Activated CD4-positive, alpha-beta T cell treated with anti-CD3 and anti-CD28 coated beads, Interleukin-2, amount 10 ng/mL, durations not matched to agents 24 days and 14 days (primary cell): ENCODE measurements at regions of chr11 and their contacts with region 1.

Region 1: GRCh38 chr11:36564376-36565030 is 3.3 kb upstream of the RAG1 start:
- DNase-seq: peak; percentile 85
- H3K4me3 Mint-ChIP-seq: peak overlapping the region; percentile 73
- H3K27ac Mint-ChIP-seq: no peak overlapping the region
- H3K4me1 Mint-ChIP-seq: peaks cover 12% of the 10 kb centered on the region
- H3K27me3 Mint-ChIP-seq: peaks cover 56% of the 10 kb centered on the region

Region 2: GRCh38 chr11:36622431-36623136 is 58.1 kb after region 1 on chr11:
- intact Hi-C with region 1: loop called (anchors 5 kb)
- DNase-seq: peak; percentile 60
- H3K4me3 Mint-ChIP-seq: no peak overlapping the region
- H3K27ac Mint-ChIP-seq: no peak overlapping the region
- H3K4me1 Mint-ChIP-seq: no peaks in the 10 kb centered on the region
- H3K27me3 Mint-ChIP-seq: peaks cover 13% of the 10 kb centered on the region

Region 3: DNA sequence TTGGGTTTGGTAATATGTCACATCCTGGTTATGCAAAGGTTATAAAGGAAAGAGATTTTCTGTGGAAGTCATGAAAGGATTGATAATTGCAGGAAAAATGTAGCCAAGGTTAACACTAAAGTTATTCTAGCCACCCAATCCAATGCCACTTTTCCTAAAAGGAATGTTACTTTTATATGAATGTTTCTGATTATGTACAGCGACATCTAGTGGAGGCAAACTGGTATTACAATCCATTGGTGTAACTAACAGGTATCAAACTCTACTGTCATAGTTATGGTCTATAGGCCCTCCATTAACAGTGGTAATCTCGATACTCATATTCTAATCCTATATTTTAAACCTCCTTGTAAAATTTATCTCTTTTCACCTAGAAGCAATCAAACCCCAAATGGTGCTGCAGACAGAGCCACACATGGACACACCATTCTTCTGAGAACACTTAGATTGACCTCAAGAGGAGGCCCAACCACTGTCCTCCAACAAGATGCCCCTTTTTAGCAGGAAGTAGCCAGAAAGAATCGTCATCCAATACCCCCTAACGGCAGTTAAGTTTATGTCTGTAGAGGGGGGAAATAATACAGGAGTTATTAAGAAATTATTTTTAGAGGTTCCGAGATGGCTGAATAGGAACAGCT is 108.4 kb after region 1 on chr11:
- intact Hi-C with region 1: loop called (anchors 1 kb)
- DNase-seq: peak; percentile 72
- H3K4me3 Mint-ChIP-seq: no peak overlapping the region
- H3K27ac Mint-ChIP-seq: no peak overlapping the region
- H3K4me1 Mint-ChIP-seq: no peaks in the 10 kb centered on the region
- H3K27me3 Mint-ChIP-seq: peaks cover 2% of the 10 kb centered on the region

Region 4: DNA sequence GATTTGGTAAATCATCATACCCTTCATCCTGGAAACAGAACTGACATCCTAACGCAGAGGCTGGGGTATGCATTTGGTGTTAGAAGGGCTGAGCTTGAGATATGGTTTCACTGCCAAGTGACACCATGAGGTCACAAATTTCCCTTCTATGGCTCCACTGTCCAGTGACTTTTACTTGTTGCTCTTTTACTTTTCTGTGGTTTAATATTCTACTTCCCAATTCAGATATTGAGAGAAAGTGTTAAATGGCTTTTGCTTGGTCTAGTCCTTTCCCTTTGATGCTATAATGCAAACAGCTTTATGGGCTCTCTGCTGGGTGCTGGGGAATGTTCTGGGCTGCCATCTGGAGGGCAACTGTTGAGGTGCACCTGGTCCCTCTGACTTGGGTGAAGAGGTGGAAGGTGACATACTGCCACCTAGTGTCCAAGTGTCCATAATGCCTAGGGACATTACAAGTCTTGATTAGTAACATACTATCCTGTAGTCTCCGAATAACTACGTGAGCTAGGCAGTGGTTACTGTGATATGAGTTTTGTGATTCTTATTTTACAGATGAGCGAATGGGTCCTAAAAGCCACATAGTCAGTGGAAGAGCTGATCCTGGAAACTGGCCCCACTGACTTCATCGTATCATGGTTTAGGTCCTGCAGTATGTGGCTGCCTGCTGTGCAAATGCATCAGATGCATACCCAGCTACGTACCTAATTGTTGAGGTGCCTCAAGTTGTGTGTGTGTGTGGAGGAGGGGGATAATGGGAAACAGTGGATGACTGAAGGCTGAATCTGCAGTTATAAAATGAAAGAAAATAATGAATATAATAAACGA is 182.6 kb after region 1 on chr11:
- intact Hi-C with region 1: loop called (anchors 1 kb)
- DNase-seq: peak; percentile 96
- H3K4me3 Mint-ChIP-seq: no peak overlapping the region
- H3K27ac Mint-ChIP-seq: no peak overlapping the region
- H3K4me1 Mint-ChIP-seq: peaks cover 2% of the 10 kb centered on the region
- H3K27me3 Mint-ChIP-seq: peaks cover 12% of the 10 kb centered on the region

Region 5: GRCh38 chr11:37076866-37077265 is 512.4 kb after region 1 on chr11:
- intact Hi-C with region 1: no loop called
- DNase-seq: no peak
- H3K4me3 Mint-ChIP-seq: no peak overlapping the region
- H3K27ac Mint-ChIP-seq: no peak overlapping the region
- H3K4me1 Mint-ChIP-seq: no peaks in the 10 kb centered on the region
- H3K27me3 Mint-ChIP-seq: no peaks in the 10 kb centered on the region